ENCODE measurements at regions of chr3 and their contacts with region 1.

Region 1: DNA sequence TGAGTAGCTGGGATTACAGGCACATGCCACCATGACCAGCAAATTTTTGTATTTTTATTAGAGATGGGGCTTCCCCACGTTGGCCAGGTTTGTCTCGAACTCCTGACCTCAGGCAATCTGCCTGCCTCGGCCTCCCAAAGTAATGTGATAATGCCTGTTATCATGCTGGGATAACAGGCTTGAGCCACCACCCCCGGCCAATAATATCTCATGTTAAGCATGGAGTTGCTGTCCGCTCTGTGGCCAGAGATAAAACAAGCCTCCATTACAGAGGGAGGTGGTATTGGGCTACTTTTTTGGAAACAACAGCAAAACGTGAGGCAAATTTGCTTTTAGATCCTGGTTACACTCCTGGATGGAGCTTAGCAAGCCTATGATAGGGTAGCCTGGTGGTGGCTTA is 32.9 kb upstream of the ALG1L2 start:
- DNase-seq: no peak
- ATAC-seq: no peak
- H3K4me3 ChIP-seq: no peak overlapping the region
- H3K4me3 Mint-ChIP-seq: no peak overlapping the region
- H3K27ac ChIP-seq: no peak overlapping the region
- H3K27ac Mint-ChIP-seq: no peak overlapping the region
- H3K4me1 ChIP-seq: no peaks in the 10 kb centered on the region
- H3K4me1 Mint-ChIP-seq: no peaks in the 10 kb centered on the region
- H3K27me3 ChIP-seq: no peaks in the 10 kb centered on the region
- H3K27me3 Mint-ChIP-seq: no peaks in the 10 kb centered on the region
- CTCF ChIP-seq: no peak

Region 2: DNA sequence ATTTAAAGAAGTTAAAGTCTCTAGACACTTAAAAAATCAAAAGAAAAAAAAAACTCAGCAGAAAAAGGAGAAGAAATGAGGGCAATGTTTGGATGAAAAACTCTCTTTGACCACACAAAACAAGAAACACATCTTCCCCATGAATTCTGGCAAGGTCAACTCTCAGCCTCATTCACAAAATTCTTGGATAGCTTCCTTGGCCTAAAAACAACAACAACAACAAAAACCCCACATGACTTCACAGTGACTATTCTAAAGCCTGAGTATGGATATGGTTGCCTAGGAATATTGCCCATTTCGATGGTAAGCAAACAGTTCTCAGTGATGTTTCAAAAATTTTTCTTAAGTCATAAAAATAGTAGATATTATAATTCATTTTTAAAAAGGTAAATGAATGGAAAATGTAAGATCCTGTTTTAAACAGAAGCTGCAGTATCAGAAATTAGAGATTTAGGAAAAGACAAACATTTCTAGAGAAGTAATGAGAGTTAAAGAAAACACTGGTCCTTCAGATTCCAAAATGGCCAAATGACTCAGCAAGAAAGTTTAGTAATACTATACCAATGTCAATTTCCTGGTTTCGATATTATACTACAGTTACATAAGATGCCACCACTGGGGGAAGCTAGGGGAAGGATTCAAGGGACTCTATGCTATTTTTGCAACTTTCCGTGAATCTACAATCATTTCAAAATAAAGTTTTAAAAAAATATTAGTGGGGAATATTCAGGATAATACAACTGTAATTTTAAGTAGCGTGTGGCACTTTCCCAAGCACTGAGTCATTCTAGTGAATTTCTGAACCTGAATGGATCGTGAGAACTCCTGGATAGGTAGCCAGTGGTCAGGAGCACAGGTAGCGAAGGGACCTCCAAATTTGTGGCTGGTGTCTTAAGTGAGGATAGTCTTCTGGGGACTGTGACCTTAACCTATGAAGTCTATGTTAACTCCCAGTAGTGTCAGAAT is 193.0 kb before region 1 on chr3:
- CTCF ChIA-PET with region 1: no interaction called
- POLR2A ChIA-PET with region 1: no interaction called
- intact Hi-C with region 1: no loop called
- DNase-seq: peak in 1 of 9 experiments; percentile 8
- ATAC-seq: no peak
- H3K4me3 ChIP-seq: no peak overlapping the region
- H3K4me3 Mint-ChIP-seq: no peak overlapping the region
- H3K27ac ChIP-seq: no peak overlapping the region
- H3K27ac Mint-ChIP-seq: peak overlapping the region; percentile 33
- H3K4me1 ChIP-seq: no peaks in the 10 kb centered on the region
- H3K4me1 Mint-ChIP-seq: peaks cover 21% of the 10 kb centered on the region
- H3K27me3 ChIP-seq: no peaks in the 10 kb centered on the region
- H3K27me3 Mint-ChIP-seq: no peaks in the 10 kb centered on the region
- CTCF ChIP-seq: no peak

Region 3: GRCh38 chr3:130088061-130088460 is 39.3 kb after region 1 on chr3:
- CTCF ChIA-PET with region 1: no interaction called
- POLR2A ChIA-PET with region 1: no interaction called
- intact Hi-C with region 1: loop called in 1 of 2 experiments (anchors 1 kb)
- DNase-seq: no peak
- ATAC-seq: no peak
- H3K4me3 ChIP-seq: no peak overlapping the region
- H3K4me3 Mint-ChIP-seq: no peak overlapping the region
- H3K27ac ChIP-seq: no peak overlapping the region
- H3K27ac Mint-ChIP-seq: no peak overlapping the region
- H3K4me1 ChIP-seq: no peaks in the 10 kb centered on the region
- H3K4me1 Mint-ChIP-seq: peaks cover 1% of the 10 kb centered on the region
- H3K27me3 ChIP-seq: no peaks in the 10 kb centered on the region
- H3K27me3 Mint-ChIP-seq: no peaks in the 10 kb centered on the region
- CTCF ChIP-seq: no peak

Region 4: GRCh38 chr3:130316169-130316568 is 267.4 kb after region 1 on chr3:
- CTCF ChIA-PET with region 1: no interaction called
- POLR2A ChIA-PET with region 1: no interaction called
- intact Hi-C with region 1: no loop called
- DNase-seq: no peak
- ATAC-seq: no peak
- H3K4me3 ChIP-seq: no peak overlapping the region
- H3K4me3 Mint-ChIP-seq: no peak overlapping the region
- H3K27ac ChIP-seq: no peak overlapping the region
- H3K27ac Mint-ChIP-seq: no peak overlapping the region
- H3K4me1 ChIP-seq: no peaks in the 10 kb centered on the region
- H3K4me1 Mint-ChIP-seq: no peaks in the 10 kb centered on the region
- H3K27me3 ChIP-seq: no peaks in the 10 kb centered on the region
- H3K27me3 Mint-ChIP-seq: peaks cover 15% of the 10 kb centered on the region
- CTCF ChIP-seq: no peak

Region 5: DNA sequence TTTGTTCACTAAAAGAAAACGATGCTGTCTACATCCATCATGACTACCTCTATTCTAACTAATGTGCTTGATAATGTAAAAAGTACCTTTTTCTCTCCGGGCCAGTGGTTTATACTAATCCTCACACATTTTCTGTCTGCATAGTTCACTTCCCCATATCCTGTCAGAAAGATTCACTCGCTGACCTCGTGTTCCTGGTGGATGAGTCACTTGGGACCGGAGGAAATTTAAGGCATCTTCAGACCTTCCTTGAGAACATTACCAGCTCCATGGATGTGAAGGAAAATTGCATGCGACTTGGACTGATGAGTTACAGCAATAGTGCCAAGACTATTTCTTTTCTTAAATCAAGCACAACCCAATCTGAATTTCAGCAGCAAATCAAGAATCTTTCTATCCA is 330.5 kb after region 1 on chr3:
- CTCF ChIA-PET with region 1: no interaction called
- POLR2A ChIA-PET with region 1: no interaction called
- intact Hi-C with region 1: no loop called
- DNase-seq: no peak
- ATAC-seq: no peak
- H3K4me3 ChIP-seq: no peak overlapping the region
- H3K4me3 Mint-ChIP-seq: no peak overlapping the region
- H3K27ac ChIP-seq: no peak overlapping the region
- H3K27ac Mint-ChIP-seq: no peak overlapping the region
- H3K4me1 ChIP-seq: no peaks in the 10 kb centered on the region
- H3K4me1 Mint-ChIP-seq: no peaks in the 10 kb centered on the region
- H3K27me3 ChIP-seq: no peaks in the 10 kb centered on the region
- H3K27me3 Mint-ChIP-seq: peaks cover 5% of the 10 kb centered on the region
- CTCF ChIP-seq: no peak

Measured in CD8-positive, alpha-beta T cell (primary cell).